Vagina (tissue), 2 donors: ENCODE measurements at regions of chr9 and their contacts with region 1.

Region 1: DNA sequence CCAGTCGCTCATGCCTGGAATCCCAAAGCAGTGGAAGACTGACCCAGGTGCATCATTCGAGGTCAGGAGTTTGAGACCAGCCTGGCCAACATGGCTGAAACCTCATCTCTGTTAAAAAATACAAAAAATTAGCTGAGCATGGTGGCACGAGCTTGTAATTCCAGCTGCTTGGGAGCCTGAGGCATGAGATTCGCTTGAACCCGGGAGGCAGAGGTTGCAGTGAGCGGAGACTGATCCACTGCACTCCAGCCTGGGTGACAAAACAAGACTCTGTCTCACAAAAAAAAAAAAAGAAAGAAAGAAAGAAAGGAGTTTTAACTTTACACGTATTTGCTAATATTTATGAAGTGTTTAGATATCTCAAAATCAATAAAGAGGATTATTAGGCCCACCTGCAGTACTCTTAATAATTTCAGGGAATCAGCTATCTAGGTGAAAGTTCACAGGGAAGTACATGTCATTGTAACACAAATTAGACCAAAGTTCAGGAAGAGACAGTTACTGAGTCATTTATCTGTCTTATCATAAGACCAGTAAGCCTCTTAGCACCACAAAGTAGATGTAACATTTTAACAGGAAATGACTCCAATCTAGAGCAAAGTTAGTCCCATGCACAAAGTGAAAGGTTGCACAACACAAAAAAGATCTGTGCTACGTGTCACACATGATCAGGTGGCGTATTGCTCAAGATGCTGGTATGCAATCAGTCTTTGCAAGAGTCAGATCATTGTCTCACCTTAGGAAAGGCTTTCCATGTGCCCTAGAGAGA is 34.1 kb upstream of the PLIN2 start:
- DNase-seq: peak in 1 of 2 donors; percentile 96
- H3K4me3 ChIP-seq: no peak overlapping the region
- H3K27ac ChIP-seq: peak overlapping the region; percentile 60
- H3K4me1 ChIP-seq: peaks cover 15% of the 10 kb centered on the region
- H3K27me3 ChIP-seq: no peaks in the 10 kb centered on the region
- CTCF ChIP-seq: no peak
- POLR2A ChIP-seq: no peak

Region 2: GRCh38 chr9:19127881-19128500 is 33.5 kb before region 1 on chr9:
- intact Hi-C with region 1: loop called (anchors 5 kb)
- DNase-seq: no peak
- H3K4me3 ChIP-seq: peak overlapping the region; percentile 62 to 89
- H3K27ac ChIP-seq: peak overlapping the region; percentile 98
- H3K4me1 ChIP-seq: peaks cover 51% of the 10 kb centered on the region
- H3K27me3 ChIP-seq: no peaks in the 10 kb centered on the region
- CTCF ChIP-seq: no peak
- POLR2A ChIP-seq: no peak